ENCODE measurements at regions of chr1 and their contacts with region 1.

Region 1: GRCh38 chr1:3453203-3453761 is 1.2 kb upstream of the ARHGEF16 start:
- DNase-seq: peak; percentile 48
- ATAC-seq: peak; percentile 98
- H3K4me3 ChIP-seq: no peak overlapping the region
- H3K27ac ChIP-seq: no peak overlapping the region
- H3K4me1 ChIP-seq: no peaks in the 10 kb centered on the region; the same call in 1 of the 2 replicates
- H3K27me3 ChIP-seq: peaks cover 28% of the 10 kb centered on the region
- CTCF ChIP-seq: peak; percentile 90
- POLR2A ChIP-seq: no peak
- RAD21 ChIP-seq: peak; percentile 94

Region 2: DNA sequence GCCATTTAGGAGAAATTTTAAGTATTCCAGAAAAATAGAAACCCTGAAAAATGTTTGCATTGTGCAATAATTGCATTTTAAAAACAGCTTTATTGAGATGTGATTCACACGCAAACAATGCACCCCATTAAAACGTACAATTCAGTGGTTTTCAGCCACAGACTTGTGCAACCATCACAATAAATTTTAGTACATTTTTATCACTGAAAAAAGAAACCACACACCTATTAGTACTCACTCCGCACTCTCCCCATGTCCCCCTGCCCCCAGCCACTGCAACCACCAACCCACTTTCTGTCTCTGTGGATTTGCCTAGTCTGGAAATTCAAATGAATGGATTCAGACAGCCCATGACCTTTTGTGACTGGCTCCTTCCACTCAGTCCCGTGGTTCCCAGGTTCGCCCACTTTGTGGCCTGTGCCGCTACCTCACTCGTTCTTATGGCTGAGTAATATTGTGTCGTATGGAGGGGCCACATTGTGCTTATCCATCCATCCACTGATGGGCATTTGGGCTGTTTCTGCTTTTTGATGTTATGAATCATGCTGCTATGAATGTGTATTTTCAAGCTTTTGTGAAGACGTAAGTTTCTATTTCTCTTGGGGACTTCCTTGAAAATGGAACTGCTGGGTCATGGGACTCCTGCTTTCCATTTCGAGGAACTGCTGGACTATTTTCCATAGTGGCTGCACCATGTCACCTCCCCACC is 146.5 kb before region 1 on chr1:
- CTCF ChIA-PET with region 1: no interaction called
- POLR2A ChIA-PET with region 1: no interaction called
- dilution Hi-C with region 1: no loop called
- in situ Hi-C with region 1: no loop called
- intact Hi-C with region 1: no loop called
- DNase-seq: peak; percentile 72
- ATAC-seq: peak; percentile 54
- H3K4me3 ChIP-seq: no peak overlapping the region
- H3K27ac ChIP-seq: no peak overlapping the region
- H3K4me1 ChIP-seq: peaks cover 6% of the 10 kb centered on the region
- H3K27me3 ChIP-seq: peaks cover 8% of the 10 kb centered on the region; the same call in 1 of the 2 replicates
- CTCF ChIP-seq: no peak
- POLR2A ChIP-seq: no peak
- RAD21 ChIP-seq: no peak

Region 3: DNA sequence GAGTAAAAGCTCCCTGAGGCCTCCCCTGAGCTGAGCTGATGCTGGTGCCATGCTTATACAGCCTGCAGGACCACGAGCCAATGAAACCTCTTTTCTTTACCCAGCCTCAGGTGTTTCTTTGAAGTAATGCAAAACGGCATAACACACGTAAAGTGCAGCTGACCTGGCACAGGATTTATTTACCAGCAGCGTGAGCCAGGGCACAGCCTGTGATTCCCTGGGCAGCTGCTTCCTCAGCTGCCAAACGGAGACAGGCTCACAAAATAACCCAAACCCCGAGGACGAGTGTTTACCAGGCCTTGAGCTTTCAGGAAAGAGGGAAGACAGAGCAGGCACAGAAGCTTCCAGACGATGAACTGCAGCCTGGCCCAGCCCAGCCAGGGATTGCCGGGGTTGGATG is 119.4 kb before region 1 on chr1:
- CTCF ChIA-PET with region 1: no interaction called
- POLR2A ChIA-PET with region 1: no interaction called
- dilution Hi-C with region 1: no loop called
- in situ Hi-C with region 1: no loop called
- intact Hi-C with region 1: no loop called
- DNase-seq: no peak
- ATAC-seq: no peak
- H3K4me3 ChIP-seq: no peak overlapping the region
- H3K27ac ChIP-seq: no peak overlapping the region
- H3K4me1 ChIP-seq: no peaks in the 10 kb centered on the region
- H3K27me3 ChIP-seq: no peaks in the 10 kb centered on the region
- CTCF ChIP-seq: no peak
- POLR2A ChIP-seq: no peak
- RAD21 ChIP-seq: no peak

Region 4: DNA sequence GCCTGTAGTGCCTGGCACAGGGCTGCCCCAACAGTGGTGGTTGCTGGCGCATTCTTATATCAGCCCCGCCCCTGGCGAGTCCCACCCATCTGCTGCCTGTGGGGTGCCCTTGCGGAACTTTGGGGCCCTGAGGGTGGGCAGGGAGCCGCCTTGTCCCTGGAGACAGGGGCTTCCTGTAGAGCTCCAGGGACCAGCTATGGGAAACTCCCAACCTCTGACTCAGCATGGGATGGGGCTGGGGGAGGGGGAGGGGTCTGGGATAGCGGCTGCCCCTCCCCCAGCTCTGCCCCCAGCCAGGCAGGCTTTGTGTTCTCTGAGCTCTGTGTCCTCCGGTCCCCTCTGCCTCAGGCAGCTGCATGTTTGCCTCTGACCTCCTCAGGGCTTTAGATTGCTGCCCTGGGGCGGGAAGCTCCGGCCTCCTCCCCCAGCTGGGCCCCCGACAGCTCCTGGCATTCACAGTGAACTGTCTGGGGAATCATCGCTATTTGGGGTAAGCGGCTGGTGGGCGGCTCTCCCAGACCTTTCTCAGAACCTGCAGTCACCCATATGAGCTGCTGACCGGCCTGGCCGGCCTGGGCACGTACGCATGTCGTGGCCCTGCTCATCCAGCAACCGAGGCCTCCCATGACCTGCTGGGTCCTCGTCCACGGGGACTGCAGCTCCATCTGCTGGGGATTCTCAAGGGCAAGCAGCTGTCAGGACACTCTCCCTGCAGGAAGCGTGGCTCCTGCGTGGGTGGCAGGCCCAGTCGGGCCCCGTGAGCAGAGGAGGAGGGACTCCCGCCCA is 18.2 kb after region 1 on chr1:
- CTCF ChIA-PET with region 1: interaction called, 12 read pairs
- POLR2A ChIA-PET with region 1: no interaction called
- dilution Hi-C with region 1: no loop called
- in situ Hi-C with region 1: no loop called
- intact Hi-C with region 1: no loop called
- DNase-seq: peak; percentile 53
- ATAC-seq: peak; percentile 53
- H3K4me3 ChIP-seq: no peak overlapping the region
- H3K27ac ChIP-seq: no peak overlapping the region
- H3K4me1 ChIP-seq: peaks cover 11% of the 10 kb centered on the region
- H3K27me3 ChIP-seq: no peaks in the 10 kb centered on the region; the same call in 1 of the 2 replicates
- CTCF ChIP-seq: peak; percentile 47
- POLR2A ChIP-seq: no peak
- RAD21 ChIP-seq: peak; percentile 33; the same call in 1 of the 2 replicates

Region 5: DNA sequence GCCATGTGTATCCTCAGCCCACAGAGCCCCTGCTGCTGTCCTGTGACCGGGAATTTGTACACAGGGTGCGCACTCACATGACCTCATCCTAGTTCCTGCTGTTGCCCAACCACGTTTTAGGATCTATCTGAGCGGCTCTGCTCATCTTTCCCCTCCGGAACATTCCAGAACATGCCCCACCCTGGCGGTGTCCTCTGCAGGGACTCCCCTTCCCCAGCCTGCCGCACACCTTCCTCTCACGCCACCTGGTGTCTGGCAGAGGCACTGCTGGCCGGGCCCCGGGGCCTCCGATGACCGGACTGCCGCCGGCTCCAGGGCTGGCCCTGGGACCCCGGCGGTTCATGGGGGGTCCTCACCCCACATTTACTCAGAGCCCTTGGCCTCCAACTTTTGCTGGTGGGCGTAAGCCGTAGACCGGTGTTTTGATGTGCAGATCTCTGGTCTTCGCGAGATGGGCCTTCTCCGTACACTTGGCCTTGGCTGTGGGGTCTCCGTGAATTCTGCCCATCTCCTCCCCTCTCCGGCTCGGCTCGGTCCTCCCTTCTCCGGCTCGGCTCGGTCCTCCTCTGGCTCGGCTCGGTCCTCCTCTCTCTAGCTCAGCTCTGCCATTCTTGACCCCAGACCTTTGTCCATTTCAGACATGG is 30.6 kb after region 1 on chr1:
- CTCF ChIA-PET with region 1: interaction called, 12 read pairs
- POLR2A ChIA-PET with region 1: no interaction called
- dilution Hi-C with region 1: no loop called
- in situ Hi-C with region 1: no loop called
- intact Hi-C with region 1: loop called (anchors 1 kb)
- DNase-seq: no peak
- ATAC-seq: peak; percentile 79
- H3K4me3 ChIP-seq: no peak overlapping the region
- H3K27ac ChIP-seq: no peak overlapping the region
- H3K4me1 ChIP-seq: no peaks in the 10 kb centered on the region
- H3K27me3 ChIP-seq: peaks cover 2% of the 10 kb centered on the region; the same call in 1 of the 2 replicates
- CTCF ChIP-seq: peak; percentile 66
- POLR2A ChIP-seq: no peak
- RAD21 ChIP-seq: peak; percentile 60

Region 6: GRCh38 chr1:3618881-3619671 is 165.8 kb after region 1 on chr1:
- CTCF ChIA-PET with region 1: interaction called, 16 read pairs
- POLR2A ChIA-PET with region 1: no interaction called
- dilution Hi-C with region 1: no loop called
- in situ Hi-C with region 1: no loop called
- intact Hi-C with region 1: loop called (anchors 1 kb)
- DNase-seq: peak; percentile 80
- ATAC-seq: peak; percentile 89
- H3K4me3 ChIP-seq: no peak overlapping the region
- H3K27ac ChIP-seq: no peak overlapping the region
- H3K4me1 ChIP-seq: peaks cover 11% of the 10 kb centered on the region
- H3K27me3 ChIP-seq: no peaks in the 10 kb centered on the region
- CTCF ChIP-seq: peak; percentile 92
- POLR2A ChIP-seq: no peak
- RAD21 ChIP-seq: peak; percentile 72

Region 7: GRCh38 chr1:3721955-3722465 is 268.7 kb after region 1 on chr1:
- CTCF ChIA-PET with region 1: no interaction called
- POLR2A ChIA-PET with region 1: no interaction called
- dilution Hi-C with region 1: no loop called
- in situ Hi-C with region 1: no loop called
- intact Hi-C with region 1: loop called (anchors 5 kb)
- DNase-seq: no peak
- ATAC-seq: no peak
- H3K4me3 ChIP-seq: no peak overlapping the region
- H3K27ac ChIP-seq: no peak overlapping the region
- H3K4me1 ChIP-seq: no peaks in the 10 kb centered on the region
- H3K27me3 ChIP-seq: peaks cover 7% of the 10 kb centered on the region
- CTCF ChIP-seq: no peak
- POLR2A ChIP-seq: no peak
- RAD21 ChIP-seq: no peak

Region 8: GRCh38 chr1:3799976-3800685 is 346.8 kb after region 1 on chr1:
- CTCF ChIA-PET with region 1: no interaction called
- POLR2A ChIA-PET with region 1: no interaction called
- dilution Hi-C with region 1: no loop called
- in situ Hi-C with region 1: no loop called
- intact Hi-C with region 1: loop called (anchors 5 kb)
- DNase-seq: no peak
- ATAC-seq: no peak
- H3K4me3 ChIP-seq: no peak overlapping the region
- H3K27ac ChIP-seq: no peak overlapping the region
- H3K4me1 ChIP-seq: peaks cover 2% of the 10 kb centered on the region; the same call in 1 of the 2 replicates
- H3K27me3 ChIP-seq: no peaks in the 10 kb centered on the region
- CTCF ChIP-seq: no peak
- POLR2A ChIP-seq: no peak
- RAD21 ChIP-seq: no peak

Measured in IMR-90 (cell line).